GM12878 (cell line): ENCODE measurements at regions of chr6 and their contacts with region 1.

Region 1: GRCh38 chr6:41334482-41335040 is 847 bp upstream of the NCR2 start:
- DNase-seq: no peak
- ATAC-seq: peak; percentile 47
- H3K4me3 ChIP-seq: no peak overlapping the region
- H3K27ac ChIP-seq: peak overlapping the region; percentile 72
- H3K4me1 ChIP-seq: peaks cover 34% of the 10 kb centered on the region
- H3K27me3 ChIP-seq: no peaks in the 10 kb centered on the region
- CTCF ChIP-seq: peak; percentile 13 to 32 (median 16); a peak in 4 of 6 replicates
- EP300 ChIP-seq: no peak
- POLR2A ChIP-seq: no peak
- RAD21 ChIP-seq: peak; percentile 30; the same call in 1 of the 2 replicates

Region 2: DNA sequence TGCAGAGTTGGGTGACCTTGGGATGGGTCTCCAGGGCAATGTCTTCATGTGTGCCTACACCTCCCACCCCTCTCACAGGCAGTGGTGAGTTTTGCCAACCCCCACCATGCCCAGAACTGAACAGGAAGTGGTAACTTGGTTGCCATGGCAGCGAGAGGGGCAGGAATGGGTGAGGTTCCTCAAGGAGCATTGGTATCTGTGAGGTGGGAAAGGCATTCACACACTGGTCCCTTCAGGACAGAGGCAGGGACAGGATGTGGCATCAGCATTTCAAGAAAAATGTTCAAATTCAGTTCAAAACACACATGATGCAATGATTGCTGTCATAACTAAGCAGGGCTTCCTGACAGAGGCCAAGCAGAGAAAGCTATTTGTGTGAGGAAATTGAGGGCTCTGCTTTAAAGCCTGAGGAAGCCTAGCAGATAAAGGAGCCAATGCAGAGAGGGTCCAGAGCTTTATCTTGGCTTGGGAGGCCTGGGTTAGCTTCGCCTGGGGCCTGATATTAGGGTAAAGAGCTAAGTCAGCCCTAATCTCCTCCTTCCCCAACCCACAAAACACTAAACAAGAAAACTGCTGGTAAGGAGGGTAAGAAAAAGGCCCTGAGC is 134.2 kb before region 1 on chr6:
- CTCF ChIA-PET with region 1: interaction called, 5 read pairs
- POLR2A ChIA-PET with region 1: interaction called, 11 read pairs
- RAD21 ChIA-PET with region 1: interaction called, 30 read pairs
- SMC1A ChIA-PET with region 1: interaction called, 27 read pairs
- in situ Hi-C with region 1: no loop called
- intact Hi-C with region 1: no loop called
- DNase-seq: peak; percentile 58
- ATAC-seq: peak; percentile 56
- H3K4me3 ChIP-seq: peak overlapping the region; percentile 37
- H3K27ac ChIP-seq: peak overlapping the region; percentile 94
- H3K4me1 ChIP-seq: peaks cover 32% of the 10 kb centered on the region
- H3K27me3 ChIP-seq: no peaks in the 10 kb centered on the region
- CTCF ChIP-seq: no peak
- EP300 ChIP-seq: no peak
- POLR2A ChIP-seq: no peak
- RAD21 ChIP-seq: no peak

Region 3: DNA sequence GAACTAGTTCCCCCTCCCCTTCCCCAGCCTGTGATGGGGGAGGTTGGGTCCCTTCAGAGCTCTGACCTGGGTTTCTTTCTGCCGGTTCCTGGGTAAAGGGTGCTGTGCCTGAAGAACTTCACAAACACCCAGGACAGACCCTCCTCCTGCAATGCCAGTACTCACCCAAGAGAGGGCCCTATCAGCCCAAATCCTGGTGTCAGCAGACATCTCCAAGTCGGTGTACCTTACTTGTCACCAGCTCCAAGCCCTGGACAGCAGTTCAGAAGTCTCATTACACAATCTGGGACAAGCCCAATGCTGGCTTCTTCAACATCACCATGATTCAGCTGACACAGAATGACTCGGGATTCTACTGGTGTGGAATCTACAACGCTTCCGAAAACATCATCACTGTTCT is 105.9 kb before region 1 on chr6:
- CTCF ChIA-PET with region 1: no interaction called
- POLR2A ChIA-PET with region 1: no interaction called
- RAD21 ChIA-PET with region 1: no interaction called
- SMC1A ChIA-PET with region 1: no interaction called
- in situ Hi-C with region 1: no loop called
- intact Hi-C with region 1: no loop called
- DNase-seq: no peak
- ATAC-seq: no peak
- H3K4me3 ChIP-seq: no peak overlapping the region
- H3K27ac ChIP-seq: no peak overlapping the region
- H3K4me1 ChIP-seq: no peaks in the 10 kb centered on the region
- H3K27me3 ChIP-seq: peaks cover 0 to 3% of the 10 kb centered on the region in 2 experiments; a peak in 1 of 4 replicates
- CTCF ChIP-seq: peak in 2 of 3 experiments; percentile 8 to 11; a peak in 1 of 6 replicates
- EP300 ChIP-seq: no peak
- POLR2A ChIP-seq: no peak
- RAD21 ChIP-seq: peak; percentile 27; the same call in 1 of the 2 replicates

Region 4: GRCh38 chr6:41286544-41287346 is 47.8 kb before region 1 on chr6 and contains the start of gene TREM1:
- CTCF ChIA-PET with region 1: interaction called, 9 read pairs
- POLR2A ChIA-PET with region 1: interaction called, 20 read pairs
- RAD21 ChIA-PET with region 1: interaction called, 27 read pairs
- SMC1A ChIA-PET with region 1: interaction called, 11 read pairs
- in situ Hi-C with region 1: no loop called
- intact Hi-C with region 1: no loop called
- DNase-seq: no peak
- ATAC-seq: no peak
- H3K4me3 ChIP-seq: no peak within 1 kb of the TSS
- H3K27ac ChIP-seq: no peak within 1 kb of the TSS
- H3K4me1 ChIP-seq: no peaks in the 10 kb centered on the region
- H3K27me3 ChIP-seq: no peaks in the 10 kb centered on the region
- CTCF ChIP-seq: no peak
- EP300 ChIP-seq: no peak
- POLR2A ChIP-seq: no peak
- RAD21 ChIP-seq: no peak
- polyA plus RNA-seq, gene TREM1: 0.11 to 0.69 TPM

Region 5: DNA sequence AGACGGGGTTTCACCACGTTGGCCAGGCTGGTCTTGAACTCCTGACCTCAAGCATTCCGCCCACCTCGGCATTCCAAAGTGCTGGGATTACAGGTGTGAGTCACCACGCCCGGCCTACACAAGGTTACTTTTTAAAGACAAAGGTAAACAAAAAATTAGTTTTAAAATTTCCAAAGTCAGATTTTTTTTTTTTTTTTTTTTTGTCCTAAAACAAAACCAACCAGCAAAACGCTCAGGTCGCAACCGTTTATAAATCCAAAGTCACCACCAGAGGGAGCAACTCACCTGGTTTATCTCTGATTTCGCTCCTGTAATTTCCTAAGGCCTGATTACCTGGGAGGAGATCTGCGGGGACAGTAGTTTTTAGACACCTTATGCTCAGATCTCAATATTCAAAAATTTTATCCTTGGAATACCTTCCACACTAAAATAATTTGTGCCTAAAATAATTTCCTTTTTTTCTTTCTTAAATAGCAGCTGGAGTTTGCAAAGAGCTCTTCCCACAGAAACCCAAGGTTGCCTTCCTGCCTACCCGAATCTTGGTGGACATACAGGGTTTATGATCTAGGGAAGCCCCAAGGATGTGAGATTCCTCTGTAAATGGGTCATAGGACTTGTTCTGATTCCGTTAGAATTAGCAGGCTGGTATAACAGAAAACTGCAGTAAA is 28.2 kb before region 1 on chr6:
- CTCF ChIA-PET with region 1: interaction called, 113 read pairs
- POLR2A ChIA-PET with region 1: interaction called, 6 read pairs
- RAD21 ChIA-PET with region 1: interaction called, 230 read pairs
- SMC1A ChIA-PET with region 1: interaction called, 253 read pairs
- in situ Hi-C with region 1: no loop called
- intact Hi-C with region 1: no loop called
- DNase-seq: no peak
- ATAC-seq: peak; percentile 68
- H3K4me3 ChIP-seq: no peak overlapping the region
- H3K27ac ChIP-seq: no peak overlapping the region
- H3K4me1 ChIP-seq: peaks cover 3% of the 10 kb centered on the region; the same call in 1 of the 2 replicates
- H3K27me3 ChIP-seq: no peaks in the 10 kb centered on the region; a peak in 1 of 4 replicates
- CTCF ChIP-seq: peak; percentile 50 to 66 (median 63)
- EP300 ChIP-seq: no peak
- POLR2A ChIP-seq: no peak
- RAD21 ChIP-seq: peak; percentile 74

Region 6: GRCh38 chr6:41344876-41345275 is 10.3 kb after region 1 on chr6:
- CTCF ChIA-PET with region 1: interaction called, 19 read pairs
- POLR2A ChIA-PET with region 1: interaction called, 15 read pairs
- RAD21 ChIA-PET with region 1: interaction called, 23 read pairs
- SMC1A ChIA-PET with region 1: interaction called, 25 read pairs
- in situ Hi-C with region 1: no loop called
- intact Hi-C with region 1: no loop called
- DNase-seq: no peak
- ATAC-seq: peak; percentile 78
- H3K4me3 ChIP-seq: no peak overlapping the region
- H3K27ac ChIP-seq: no peak overlapping the region
- H3K4me1 ChIP-seq: 0 out of 2 replicates have a peak, but pooled peaks cover 7% of the 10 kb centered on the region
- H3K27me3 ChIP-seq: peaks cover 0 to 3% of the 10 kb centered on the region in 2 experiments; a peak in 3 of 4 replicates
- CTCF ChIP-seq: no peak
- EP300 ChIP-seq: no peak
- POLR2A ChIP-seq: no peak
- RAD21 ChIP-seq: no peak

Region 7: DNA sequence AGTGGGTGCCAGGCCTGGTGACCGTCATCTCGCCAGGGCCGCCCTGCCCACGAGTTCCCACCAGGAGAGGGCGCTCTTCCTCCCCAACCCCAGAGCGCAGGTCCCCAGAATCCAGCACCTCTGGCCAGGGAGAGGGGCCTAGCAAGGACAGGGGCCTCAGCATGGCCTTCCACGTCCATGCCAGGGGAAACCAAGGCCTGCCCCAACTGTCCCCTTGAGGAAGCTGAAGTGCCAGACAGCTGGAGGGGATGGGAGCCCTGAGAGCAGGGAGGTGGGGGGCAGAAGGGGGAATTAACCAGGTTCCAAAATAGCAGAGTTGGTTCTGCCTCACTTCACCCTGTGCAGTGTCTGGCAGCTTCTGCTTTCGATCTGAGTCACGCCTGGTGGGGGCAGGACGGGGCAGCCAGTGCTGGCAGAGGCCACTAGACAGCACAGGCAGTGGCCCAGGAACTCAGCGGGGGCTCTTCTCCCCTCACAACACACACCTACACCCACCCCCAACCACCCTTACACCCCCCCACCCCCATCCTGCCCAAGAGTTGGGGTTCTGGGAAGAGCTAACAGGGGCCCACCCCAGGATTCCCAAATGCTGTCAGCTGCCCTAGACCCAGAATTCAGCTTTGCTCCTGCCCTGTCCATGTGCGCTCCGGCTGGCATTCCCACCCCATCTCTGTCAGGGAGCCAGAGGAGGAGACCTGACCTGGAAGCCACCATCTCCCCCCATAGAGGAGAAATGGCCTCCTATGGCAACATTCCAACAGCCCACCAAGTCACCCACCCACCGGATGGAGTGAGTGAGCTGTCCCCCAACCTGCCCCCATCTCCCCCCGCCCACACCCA is 371.7 kb after region 1 on chr6:
- CTCF ChIA-PET with region 1: interaction called, 10 read pairs
- POLR2A ChIA-PET with region 1: interaction called, 4 read pairs
- RAD21 ChIA-PET with region 1: interaction called, 5 read pairs
- SMC1A ChIA-PET with region 1: interaction called, 4 read pairs
- in situ Hi-C with region 1: no loop called
- intact Hi-C with region 1: no loop called
- DNase-seq: peak; percentile 87
- ATAC-seq: peak; percentile 90
- H3K4me3 ChIP-seq: peak overlapping the region; percentile 85
- H3K27ac ChIP-seq: peak overlapping the region; percentile 99
- H3K4me1 ChIP-seq: peaks cover 55% of the 10 kb centered on the region
- H3K27me3 ChIP-seq: no peaks in the 10 kb centered on the region
- CTCF ChIP-seq: peak; percentile 82 to 96 (median 91)
- EP300 ChIP-seq: peak; percentile 93 to 97
- POLR2A ChIP-seq: peak; percentile 51; the same call in 1 of the 2 replicates
- RAD21 ChIP-seq: peak; percentile 48

Region 8: GRCh38 chr6:41735427-41736356 is 401.1 kb after region 1 on chr6 and contains the start of gene TFEB:
- CTCF ChIA-PET with region 1: interaction called, 9 read pairs
- POLR2A ChIA-PET with region 1: interaction called, 13 read pairs
- RAD21 ChIA-PET with region 1: interaction called, 11 read pairs
- SMC1A ChIA-PET with region 1: interaction called, 4 read pairs
- in situ Hi-C with region 1: no loop called
- intact Hi-C with region 1: no loop called
- DNase-seq: no peak
- ATAC-seq: peak; percentile 19
- H3K4me3 ChIP-seq: peak within 1 kb of the TSS; percentile 92
- H3K27ac ChIP-seq: peak within 1 kb of the TSS; percentile 98
- H3K4me1 ChIP-seq: peaks cover 1% of the 10 kb centered on the region
- H3K27me3 ChIP-seq: no peaks in the 10 kb centered on the region; a peak in 1 of 4 replicates
- CTCF ChIP-seq: peak; percentile 92 to 97 (median 95)
- EP300 ChIP-seq: no peak
- POLR2A ChIP-seq: no peak; the same call in 1 of the 2 replicates
- RAD21 ChIP-seq: peak; percentile 57
- polyA plus RNA-seq, gene TFEB: 0.84 to 2.6 TPM